ENCODE measurements at regions of chr11 and their contacts with region 1.

Region 1: GRCh38 chr11:72112321-72113219 is at the start of gene ANAPC15:
- DNase-seq: peak; percentile 99
- ATAC-seq: peak; percentile 96
- H3K4me3 ChIP-seq: peak within 1 kb of the TSS; percentile 69
- H3K27ac ChIP-seq: peak within 1 kb of the TSS; percentile 99
- H3K4me1 ChIP-seq: peaks cover 7% of the 10 kb centered on the region
- H3K27me3 ChIP-seq: no peaks in the 10 kb centered on the region
- CTCF ChIP-seq: no peak
- EP300 ChIP-seq: no peak
- POLR2A ChIP-seq: peak; percentile 99
- RAD21 ChIP-seq: no peak
- polyA plus RNA-seq, gene ANAPC15: 230 to 372 TPM

Region 2: DNA sequence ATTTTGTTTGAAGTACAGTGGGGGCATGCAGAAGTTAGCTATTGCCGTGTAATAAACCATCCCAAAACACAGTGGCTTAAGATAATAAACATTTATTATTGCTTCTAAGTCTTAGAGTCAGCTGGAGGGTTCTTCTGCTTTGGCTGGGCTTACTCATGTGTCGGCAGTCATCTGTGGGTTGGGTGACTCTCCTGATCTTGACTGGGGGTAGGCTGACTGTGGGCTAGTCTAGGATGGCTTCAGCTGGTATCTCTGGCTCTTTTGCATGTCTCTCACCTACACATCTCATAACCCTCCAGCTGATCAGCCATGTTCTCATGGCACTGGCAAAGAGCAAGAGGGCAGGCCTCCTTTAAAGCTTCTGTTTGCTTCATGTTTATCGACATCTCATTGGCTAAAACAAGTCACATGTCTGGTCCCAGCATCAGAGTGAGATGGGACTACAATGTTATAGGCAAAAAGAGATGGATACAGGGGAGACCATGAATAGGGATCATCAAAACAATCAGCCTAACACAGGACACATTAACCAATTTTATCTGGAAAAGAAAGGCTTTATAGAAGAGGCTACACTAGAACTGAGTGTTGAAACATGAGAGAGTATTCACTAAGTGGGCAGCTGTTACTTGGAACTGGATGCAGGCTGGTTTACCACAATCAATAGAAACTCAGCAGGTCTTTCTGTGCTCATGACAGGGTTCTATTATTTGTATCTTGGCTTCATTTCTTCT is 26.8 kb before region 1 on chr11:
- CTCF ChIA-PET with region 1: no interaction called
- POLR2A ChIA-PET with region 1: interaction called, 11 read pairs
- RAD21 ChIA-PET with region 1: interaction called, 4 read pairs
- SMC1A ChIA-PET with region 1: interaction called, 4 read pairs
- in situ Hi-C with region 1: no loop called
- intact Hi-C with region 1: no loop called
- DNase-seq: no peak
- ATAC-seq: no peak
- H3K4me3 ChIP-seq: no peak overlapping the region
- H3K27ac ChIP-seq: no peak overlapping the region
- H3K4me1 ChIP-seq: peaks cover 10% of the 10 kb centered on the region
- H3K27me3 ChIP-seq: no peaks in the 10 kb centered on the region
- CTCF ChIP-seq: no peak
- EP300 ChIP-seq: no peak
- POLR2A ChIP-seq: no peak
- RAD21 ChIP-seq: no peak

Region 3: GRCh38 chr11:72222907-72223614 is 110.5 kb after region 1 on chr11:
- CTCF ChIA-PET with region 1: no interaction called
- POLR2A ChIA-PET with region 1: interaction called, 4 read pairs
- RAD21 ChIA-PET with region 1: no interaction called
- SMC1A ChIA-PET with region 1: no interaction called
- in situ Hi-C with region 1: no loop called
- intact Hi-C with region 1: loop called (anchors 1 kb)
- DNase-seq: peak; percentile 76
- ATAC-seq: peak; percentile 85
- H3K4me3 ChIP-seq: peak overlapping the region; percentile 99
- H3K27ac ChIP-seq: peak overlapping the region; percentile 75
- H3K4me1 ChIP-seq: peaks cover 23% of the 10 kb centered on the region
- H3K27me3 ChIP-seq: no peaks in the 10 kb centered on the region
- CTCF ChIP-seq: no peak
- EP300 ChIP-seq: no peak
- POLR2A ChIP-seq: peak; percentile 66; the same call in 1 of the 2 replicates
- RAD21 ChIP-seq: no peak